Aorta (tissue), 5 donors: ENCODE measurements at regions of chr15 and their contacts with region 1.

Region 1: GRCh38 chr15:43903864-43904290 is 77.1 kb downstream of the WDR76 start:
- DNase-seq: no peak
- ATAC-seq: peak; percentile 76
- H3K4me3 ChIP-seq: no peak overlapping the region
- H3K27ac ChIP-seq: no peak overlapping the region
- H3K4me1 ChIP-seq: no peaks in the 10 kb centered on the region
- H3K27me3 ChIP-seq: no peaks in the 10 kb centered on the region

Region 2: GRCh38 chr15:43519196-43519595 is 384.7 kb before region 1 on chr15:
- intact Hi-C with region 1: no loop called
- DNase-seq: no peak
- ATAC-seq: no peak
- H3K4me3 ChIP-seq: no peak overlapping the region
- H3K27ac ChIP-seq: no peak overlapping the region
- H3K4me1 ChIP-seq: no peaks in the 10 kb centered on the region
- H3K27me3 ChIP-seq: no peaks in the 10 kb centered on the region

Region 3: DNA sequence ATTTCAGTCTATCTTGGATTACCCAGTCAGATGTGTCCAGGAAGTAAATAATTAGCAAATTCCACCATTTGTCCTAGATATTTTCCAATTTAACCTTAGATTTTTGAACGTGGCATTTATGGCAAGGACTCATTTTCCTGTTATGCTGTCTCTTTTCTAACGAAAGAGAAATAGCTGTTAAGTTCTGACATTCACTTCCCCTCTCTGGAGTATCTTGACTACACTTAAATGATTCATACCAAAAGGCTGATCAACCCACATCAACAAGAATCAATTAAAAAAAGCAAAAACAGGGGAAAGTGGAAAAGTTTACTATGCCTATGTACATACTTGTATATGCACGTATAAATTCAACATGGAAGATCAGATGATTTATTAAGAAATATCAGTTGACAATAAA is 141.3 kb after region 1 on chr15:
- intact Hi-C with region 1: no loop called
- DNase-seq: no peak
- ATAC-seq: no peak
- H3K4me3 ChIP-seq: no peak overlapping the region
- H3K27ac ChIP-seq: no peak overlapping the region
- H3K4me1 ChIP-seq: no peaks in the 10 kb centered on the region
- H3K27me3 ChIP-seq: no peaks in the 10 kb centered on the region

Region 4: GRCh38 chr15:44066316-44066740 is 162.5 kb after region 1 on chr15:
- intact Hi-C with region 1: loop called (anchors 2 to 5 kb)
- DNase-seq: peak in 1 of 2 donors; percentile 47
- ATAC-seq: no peak
- H3K4me3 ChIP-seq: no peak overlapping the region
- H3K27ac ChIP-seq: no peak overlapping the region
- H3K4me1 ChIP-seq: no peaks in the 10 kb centered on the region
- H3K27me3 ChIP-seq: no peaks in the 10 kb centered on the region

Region 5: GRCh38 chr15:44137750-44138149 is 233.9 kb after region 1 on chr15:
- intact Hi-C with region 1: loop called in 1 of 2 experiments (anchors 10 kb)
- DNase-seq: no peak
- ATAC-seq: no peak
- H3K4me3 ChIP-seq: no peak overlapping the region
- H3K27ac ChIP-seq: no peak overlapping the region
- H3K4me1 ChIP-seq: no peaks in the 10 kb centered on the region
- H3K27me3 ChIP-seq: no peaks in the 10 kb centered on the region

Region 6: DNA sequence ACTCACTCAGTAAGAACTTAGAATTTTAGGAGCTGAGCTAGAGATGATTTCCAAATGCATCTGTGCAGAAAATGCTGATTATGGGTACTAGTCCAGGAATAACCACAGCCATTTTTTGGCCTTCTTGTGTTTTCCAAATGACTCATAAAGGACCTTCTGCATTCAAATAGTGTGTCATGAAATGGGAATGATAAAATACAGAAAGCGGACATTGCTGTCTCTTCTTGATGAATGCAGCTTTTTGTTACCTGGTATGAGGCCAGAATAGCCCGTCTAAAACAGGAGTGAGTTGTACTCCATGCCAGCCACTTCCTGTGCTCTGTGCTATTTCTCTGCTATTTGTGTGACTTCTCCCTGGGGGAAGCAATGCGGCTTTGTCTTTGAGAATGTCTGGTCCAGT is 311.7 kb after region 1 on chr15:
- intact Hi-C with region 1: loop called (anchors 1 to 10 kb)
- DNase-seq: no peak
- ATAC-seq: no peak
- H3K4me3 ChIP-seq: no peak overlapping the region
- H3K27ac ChIP-seq: no peak overlapping the region
- H3K4me1 ChIP-seq: no peaks in the 10 kb centered on the region
- H3K27me3 ChIP-seq: no peaks in the 10 kb centered on the region